ENCODE measurements at regions of chr17 and their contacts with region 1.

Region 1: GRCh38 chr17:48547808-48548522 is 3.1 kb upstream of the HOXB2 start:
- DNase-seq: no peak
- H3K4me3 ChIP-seq: peak overlapping the region in 1 of 4 experiments; percentile 2; a peak in 1 of 8 replicates
- H3K27ac ChIP-seq: no peak overlapping the region
- H3K4me1 ChIP-seq: peaks cover 7 to 30% (median 11%) of the 10 kb centered on the region in 4 experiments
- H3K27me3 ChIP-seq: peaks cover 94 to 100% (median 99%) of the 10 kb centered on the region in 4 experiments
- CTCF ChIP-seq: no peak
- EP300 ChIP-seq: no peak
- POLR2A ChIP-seq: no peak
- RAD21 ChIP-seq: no peak

Region 2: GRCh38 chr17:48500966-48501426 is 47.0 kb before region 1 on chr17:
- CTCF ChIA-PET with region 1: interaction called, 15 read pairs
- POLR2A ChIA-PET with region 1: no interaction called
- DNase-seq: no peak
- H3K4me3 ChIP-seq: no peak overlapping the region
- H3K27ac ChIP-seq: no peak overlapping the region
- H3K4me1 ChIP-seq: peaks cover 0 to 4% (median 2%) of the 10 kb centered on the region in 4 experiments; a peak in 4 of 7 replicates
- H3K27me3 ChIP-seq: peaks cover 0 to 18% (median 14%) of the 10 kb centered on the region in 4 experiments; a peak in 5 of 7 replicates
- CTCF ChIP-seq: peak in 2 of 3 experiments; percentile 60 to 66; a peak in 3 of 4 replicates
- EP300 ChIP-seq: no peak
- POLR2A ChIP-seq: no peak
- RAD21 ChIP-seq: peak; percentile 71 to 78

Region 3: DNA sequence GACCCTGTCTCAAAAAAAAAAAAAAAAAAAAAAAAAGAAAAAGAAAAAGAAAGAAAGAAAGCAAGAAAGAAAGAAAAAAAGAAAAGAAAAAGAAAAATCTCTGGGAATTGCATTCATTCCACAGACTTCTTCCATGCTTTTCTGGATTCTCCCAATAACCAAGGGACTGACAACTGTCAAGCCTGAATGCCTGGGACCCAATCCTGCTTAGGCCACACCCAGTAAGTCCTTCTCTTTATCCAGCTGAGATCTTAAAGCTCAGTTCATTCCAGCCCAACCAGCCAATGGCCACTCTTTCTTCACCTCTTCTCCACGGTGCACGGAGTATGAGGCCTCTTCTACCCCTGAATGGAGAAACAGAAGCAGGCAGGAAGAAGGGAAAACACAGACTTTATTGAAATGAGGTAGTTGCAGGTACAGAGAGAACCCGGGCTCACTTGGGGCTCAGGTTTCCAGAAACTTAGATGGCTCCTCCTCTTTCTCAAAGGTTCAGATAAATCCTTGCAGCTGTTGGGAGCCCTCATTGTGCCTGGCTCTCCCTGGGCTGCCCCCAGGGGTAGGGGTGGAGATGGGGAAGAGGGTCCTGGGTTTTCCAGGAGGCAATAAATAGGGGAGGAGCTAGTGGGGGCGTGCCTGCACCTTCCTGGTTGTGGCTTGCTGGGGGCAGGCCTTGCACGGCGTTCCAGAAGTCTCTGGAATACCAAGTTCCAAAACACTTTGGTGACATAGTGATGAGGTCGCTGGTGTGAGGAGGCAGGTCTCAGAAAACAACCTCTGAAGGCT is 19.6 kb before region 1 on chr17:
- CTCF ChIA-PET with region 1: interaction called, 14 read pairs
- POLR2A ChIA-PET with region 1: no interaction called
- DNase-seq: no peak
- H3K4me3 ChIP-seq: no peak overlapping the region
- H3K27ac ChIP-seq: no peak overlapping the region
- H3K4me1 ChIP-seq: peaks cover 0 to 20% (median 10%) of the 10 kb centered on the region in 4 experiments; a peak in 6 of 7 replicates
- H3K27me3 ChIP-seq: peaks cover 77 to 100% (median 96%) of the 10 kb centered on the region in 4 experiments
- CTCF ChIP-seq: no peak
- EP300 ChIP-seq: no peak
- POLR2A ChIP-seq: no peak
- RAD21 ChIP-seq: no peak

Region 4: DNA sequence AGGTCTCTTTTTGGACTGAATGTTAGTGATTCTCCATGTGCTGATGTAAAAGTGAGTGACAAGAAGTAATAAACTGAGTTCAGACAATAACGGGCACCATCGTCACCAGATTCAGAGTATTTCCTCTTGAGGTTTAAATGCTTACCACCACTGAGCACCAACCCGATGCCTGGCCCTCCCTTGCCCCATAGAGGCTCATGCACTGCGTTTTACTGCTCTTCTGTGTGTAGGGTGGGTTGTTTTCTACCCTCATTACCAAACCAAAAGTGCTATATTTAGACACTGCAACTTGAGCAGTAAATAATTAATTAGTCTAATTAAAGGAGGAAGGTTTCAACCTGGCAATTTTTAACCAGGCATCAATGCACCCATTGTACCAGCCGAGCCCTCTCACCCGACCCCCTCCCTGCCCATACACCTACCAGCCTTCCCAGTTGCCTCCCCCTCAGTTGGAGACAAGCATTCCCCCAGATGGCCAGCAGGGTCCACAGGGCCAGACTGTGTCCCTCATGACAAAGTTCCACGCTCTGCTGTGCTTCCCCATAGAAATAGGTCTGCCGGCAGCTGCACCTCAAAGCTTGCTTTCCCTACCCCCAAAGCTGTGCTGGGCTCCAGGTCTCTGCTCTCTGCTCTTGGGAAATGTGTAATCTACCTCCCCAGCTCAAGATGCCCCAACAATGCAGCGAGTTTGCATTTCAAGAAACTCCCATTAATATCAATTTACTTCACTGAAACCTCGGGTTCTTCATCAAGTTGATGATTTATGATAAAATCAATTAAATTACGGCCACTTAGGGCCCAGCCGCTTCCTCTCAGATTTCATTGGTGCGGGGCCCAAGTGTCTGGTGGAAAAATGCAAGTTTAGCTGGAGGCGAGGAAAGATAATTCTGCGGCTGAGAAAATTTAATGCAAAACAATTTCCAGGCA is 14.2 kb after region 1 on chr17:
- CTCF ChIA-PET with region 1: interaction called, 14 read pairs
- POLR2A ChIA-PET with region 1: interaction called, 4 read pairs
- DNase-seq: no peak
- H3K4me3 ChIP-seq: no peak overlapping the region
- H3K27ac ChIP-seq: no peak overlapping the region
- H3K4me1 ChIP-seq: peaks cover 0 to 8% (median 3%) of the 10 kb centered on the region in 4 experiments; a peak in 5 of 7 replicates
- H3K27me3 ChIP-seq: peaks cover 99 to 100% (median 100%) of the 10 kb centered on the region in 4 experiments
- CTCF ChIP-seq: peak; percentile 10 to 43 (median 36); a peak in 3 of 4 replicates
- EP300 ChIP-seq: no peak
- POLR2A ChIP-seq: no peak
- RAD21 ChIP-seq: no peak

Region 5: DNA sequence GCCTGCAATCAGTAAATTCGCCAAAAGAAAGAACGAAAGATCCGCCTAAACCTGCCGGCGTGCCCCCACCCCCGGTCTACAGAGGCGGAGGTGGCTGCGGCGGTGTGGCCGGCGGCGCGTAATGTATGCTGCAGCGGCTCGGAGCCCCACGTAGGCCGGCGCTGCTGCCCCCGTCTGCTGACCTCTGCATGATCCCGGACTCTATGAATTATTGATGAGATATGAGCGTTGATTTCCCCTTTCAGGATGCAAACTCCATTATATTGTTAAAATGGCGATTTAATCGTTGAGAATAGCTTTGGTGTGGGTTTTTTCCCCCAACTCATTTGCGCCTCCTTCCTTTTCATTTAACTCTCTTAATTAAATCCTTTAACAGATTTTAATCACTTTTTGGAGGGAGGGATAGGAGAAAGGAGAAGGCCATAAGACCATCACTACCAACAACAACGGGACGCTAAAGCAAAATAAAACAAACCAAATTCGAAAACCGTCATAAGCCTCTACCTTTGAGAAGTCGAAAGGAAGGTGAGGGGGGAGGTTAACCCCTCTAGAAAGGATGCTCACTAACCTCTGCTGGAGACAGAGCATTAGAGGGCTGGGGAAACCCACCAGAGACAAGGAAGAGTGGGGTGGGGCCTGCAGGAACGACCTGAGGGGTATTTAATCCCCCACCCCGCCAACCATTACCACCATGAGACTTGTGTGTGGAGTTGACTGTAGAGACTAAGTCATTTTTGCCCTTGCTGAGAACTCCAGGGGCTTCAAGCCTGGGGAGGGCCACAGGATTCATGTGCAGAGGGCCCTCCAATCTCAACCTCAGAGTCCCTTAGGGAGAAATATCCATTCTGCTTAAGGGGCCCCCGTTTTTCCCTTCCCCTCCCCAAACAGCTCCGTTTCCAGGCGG is 38.6 kb after region 1 on chr17:
- CTCF ChIA-PET with region 1: interaction called, 53 read pairs
- POLR2A ChIA-PET with region 1: no interaction called
- DNase-seq: no peak
- H3K4me3 ChIP-seq: 0 out of 8 replicates have a peak overlapping the region, but pooled peaks of 1 of the 4 experiments have one; percentile 42
- H3K27ac ChIP-seq: no peak overlapping the region
- H3K4me1 ChIP-seq: peaks cover 0 to 5% (median 3%) of the 10 kb centered on the region in 4 experiments; a peak in 4 of 7 replicates
- H3K27me3 ChIP-seq: peaks cover 99 to 100% (median 100%) of the 10 kb centered on the region in 4 experiments
- CTCF ChIP-seq: no peak
- EP300 ChIP-seq: no peak
- POLR2A ChIP-seq: no peak
- RAD21 ChIP-seq: no peak

Region 6: DNA sequence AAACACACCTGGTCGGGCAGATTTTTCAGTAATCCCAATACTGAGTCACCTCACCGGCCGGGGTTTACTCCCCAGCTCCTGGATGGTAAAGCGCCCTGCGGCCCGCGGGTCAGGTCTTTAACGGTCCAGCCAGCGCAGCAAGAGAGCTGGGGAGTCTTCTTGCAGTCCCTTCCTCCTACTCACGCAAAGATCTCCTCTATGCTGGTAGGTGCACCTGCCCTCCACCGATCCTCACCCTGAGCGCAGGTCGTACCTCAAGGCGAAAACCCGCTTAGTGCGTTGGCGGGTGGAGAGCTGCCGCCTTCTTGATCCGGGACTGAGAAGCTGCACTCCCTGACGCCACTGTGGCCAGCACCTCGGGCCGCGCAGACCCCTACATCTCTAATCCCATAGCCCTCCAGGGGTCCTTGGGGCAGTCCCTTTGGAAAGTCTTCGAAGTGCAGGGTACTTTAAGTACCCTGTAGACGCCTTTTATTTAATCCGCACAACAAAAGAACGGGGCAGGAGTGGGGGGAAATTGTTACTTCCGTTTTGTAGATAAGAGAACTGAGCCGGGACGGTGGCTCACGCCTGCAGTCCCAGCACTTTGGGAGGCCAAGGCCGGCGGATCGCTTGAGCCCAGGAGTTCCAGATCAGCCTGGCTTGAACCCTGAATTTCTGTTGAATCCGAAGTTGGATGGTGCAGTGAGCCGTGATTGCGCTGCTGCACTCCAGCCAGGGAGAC is 191.0 kb after region 1 on chr17:
- CTCF ChIA-PET with region 1: no interaction called
- POLR2A ChIA-PET with region 1: no interaction called
- DNase-seq: peak in 1 of 2 experiments; percentile 65
- H3K4me3 ChIP-seq: no peak overlapping the region
- H3K27ac ChIP-seq: no peak overlapping the region
- H3K4me1 ChIP-seq: no peaks in the 10 kb centered on the region; a peak in 2 of 7 replicates
- H3K27me3 ChIP-seq: peaks cover 92 to 100% (median 100%) of the 10 kb centered on the region in 4 experiments
- CTCF ChIP-seq: no peak
- EP300 ChIP-seq: no peak
- POLR2A ChIP-seq: no peak
- RAD21 ChIP-seq: no peak

Measured in H1 (cell line).